Ascending aorta (tissue), 2 donors: ENCODE measurements at regions of chr6 and their contacts with region 1.

Region 1: DNA sequence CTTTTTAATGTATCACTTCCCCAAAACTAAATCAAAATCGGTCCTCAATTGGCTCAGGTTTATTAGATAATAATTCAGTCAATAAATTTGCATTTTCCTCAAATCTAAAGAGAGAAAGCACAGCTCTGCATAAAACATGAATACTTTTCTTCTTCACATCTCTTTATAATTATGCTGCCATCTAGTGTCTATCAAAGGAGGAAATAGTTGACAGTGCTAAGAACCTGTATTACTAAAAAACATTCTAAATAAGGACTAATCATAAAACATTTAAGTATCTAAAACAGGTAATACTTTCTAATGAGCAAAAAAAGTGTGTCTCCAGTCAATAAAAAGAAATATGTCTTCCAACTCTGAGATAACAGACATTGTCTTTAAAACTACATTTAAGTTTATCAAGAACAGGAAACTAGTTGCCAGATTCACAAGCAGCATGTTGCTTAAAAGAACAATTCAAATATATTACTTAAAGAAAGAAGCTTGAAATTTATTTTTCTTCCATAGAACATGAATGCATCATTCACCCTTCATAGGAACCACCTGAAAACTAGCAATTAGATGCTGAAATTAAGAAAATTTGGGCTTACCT is 56.5 kb upstream of the DST start:
- DNase-seq: no peak
- H3K4me3 ChIP-seq: no peak overlapping the region
- H3K27ac ChIP-seq: no peak overlapping the region
- H3K4me1 ChIP-seq: peaks cover 0 to 4% of the 10 kb centered on the region in 2 donors
- H3K27me3 ChIP-seq: no peaks in the 10 kb centered on the region
- CTCF ChIP-seq: peak; percentile 46 to 69 (median 54)

Region 2: DNA sequence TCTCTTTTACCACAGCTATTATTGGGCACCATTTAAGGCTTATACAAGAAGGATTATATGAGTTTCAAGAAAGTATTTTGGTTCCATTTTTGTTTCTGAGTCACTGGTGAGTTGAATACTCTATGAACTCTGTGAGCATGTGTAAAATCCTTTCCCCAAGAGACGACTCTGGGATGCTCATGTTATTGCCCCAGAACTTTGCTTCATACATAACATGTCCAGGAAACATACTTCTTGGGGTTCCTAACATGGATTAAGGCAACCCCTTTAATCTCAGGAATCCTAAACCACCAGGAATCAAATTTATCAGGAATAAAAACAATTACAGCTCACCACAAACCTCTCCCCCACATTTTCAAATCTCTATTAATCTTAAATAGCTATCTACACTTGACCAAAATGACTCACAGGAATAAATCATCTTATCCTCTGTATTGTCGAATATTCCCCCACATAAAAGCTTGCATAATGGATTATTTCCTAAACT is 334.3 kb before region 1 on chr6:
- intact Hi-C with region 1: loop called (anchors 10 kb)
- DNase-seq: no peak
- H3K4me3 ChIP-seq: no peak overlapping the region
- H3K27ac ChIP-seq: no peak overlapping the region
- H3K4me1 ChIP-seq: peaks cover 0 to 20% of the 10 kb centered on the region in 2 donors
- H3K27me3 ChIP-seq: no peaks in the 10 kb centered on the region
- CTCF ChIP-seq: no peak

Region 3: GRCh38 chr6:56556751-56557540 is 142.2 kb before region 1 on chr6:
- intact Hi-C with region 1: no loop called
- DNase-seq: no peak
- H3K4me3 ChIP-seq: no peak overlapping the region
- H3K27ac ChIP-seq: no peak overlapping the region
- H3K4me1 ChIP-seq: peaks cover 0 to 9% of the 10 kb centered on the region in 2 donors
- H3K27me3 ChIP-seq: no peaks in the 10 kb centered on the region
- CTCF ChIP-seq: no peak